GM13977 (cell line): ENCODE measurements at regions of chr17 and their contacts with region 1.

Region 1: DNA sequence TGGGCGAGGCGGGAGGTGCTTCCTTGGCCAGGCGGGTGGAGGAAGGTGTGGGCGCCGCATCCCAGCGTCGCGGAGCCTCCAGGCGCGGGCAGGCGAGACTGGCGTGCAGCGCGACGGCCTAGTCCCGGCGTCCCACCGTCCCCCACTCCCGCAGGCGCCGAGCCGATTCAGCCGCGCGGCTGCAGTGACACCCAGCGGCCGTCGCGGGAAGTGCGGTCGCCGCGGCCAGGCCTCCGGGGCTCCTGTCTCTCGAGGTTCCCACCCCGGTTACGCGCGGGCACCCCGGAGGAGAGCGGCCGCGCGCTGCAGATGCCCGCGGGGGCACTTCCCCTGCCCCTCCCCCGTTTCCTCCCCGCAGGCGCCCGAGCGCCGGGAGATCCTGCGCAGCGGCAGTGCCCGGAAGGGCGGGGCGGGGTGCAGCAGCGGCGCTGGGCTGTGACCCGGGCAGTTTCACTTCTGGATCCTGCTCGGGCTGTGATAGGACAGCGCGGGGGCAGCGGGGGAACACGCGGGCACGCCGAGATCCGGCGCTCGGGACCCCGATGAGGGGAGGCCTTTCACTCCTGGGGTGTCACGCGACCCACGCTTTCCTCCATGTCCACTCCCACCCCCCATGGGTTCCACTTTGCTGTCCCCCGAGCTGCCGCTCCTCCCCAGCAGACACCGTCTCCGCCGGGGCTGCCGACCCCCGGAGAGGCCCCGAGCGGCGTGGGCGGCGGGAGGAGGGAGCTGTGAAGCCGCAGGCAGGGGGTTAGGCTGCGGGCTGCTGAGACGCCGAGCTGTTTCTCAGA is 16.6 kb downstream of the GRB7 start:
- DNase-seq: peak; percentile 97
- CTCF ChIP-seq: peak; percentile 95

Region 2: GRCh38 chr17:39621523-39622379 is 132.6 kb before region 1 on chr17:
- in situ Hi-C with region 1: loop called (anchors 10 kb)
- DNase-seq: peak; percentile 93
- CTCF ChIP-seq: peak; percentile 100